GM10248 (cell line): ENCODE measurements at regions of chr7 and their contacts with region 1.

Region 1: DNA sequence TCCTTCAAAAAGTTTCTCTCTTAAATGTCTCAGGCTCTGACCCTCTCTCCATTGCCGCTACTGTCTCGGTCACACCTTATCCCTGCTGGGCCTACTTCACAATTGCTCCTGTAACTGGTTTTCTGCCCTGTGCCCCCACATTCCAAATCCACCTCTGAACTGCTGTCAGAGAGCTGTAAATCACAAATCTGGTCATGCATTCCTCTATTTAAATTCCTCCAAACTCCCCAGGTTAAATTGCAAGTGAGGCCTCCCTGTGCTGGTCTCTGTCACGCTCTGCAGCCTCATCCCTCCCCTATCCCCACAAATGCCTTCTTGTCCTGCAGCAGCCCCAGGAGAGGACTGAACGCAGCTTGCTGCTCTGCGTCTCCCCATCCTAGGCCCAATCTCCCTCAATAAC is 40.4 kb upstream of the CDCA7L start:
- DNase-seq: no peak
- CTCF ChIP-seq: no peak

Region 2: DNA sequence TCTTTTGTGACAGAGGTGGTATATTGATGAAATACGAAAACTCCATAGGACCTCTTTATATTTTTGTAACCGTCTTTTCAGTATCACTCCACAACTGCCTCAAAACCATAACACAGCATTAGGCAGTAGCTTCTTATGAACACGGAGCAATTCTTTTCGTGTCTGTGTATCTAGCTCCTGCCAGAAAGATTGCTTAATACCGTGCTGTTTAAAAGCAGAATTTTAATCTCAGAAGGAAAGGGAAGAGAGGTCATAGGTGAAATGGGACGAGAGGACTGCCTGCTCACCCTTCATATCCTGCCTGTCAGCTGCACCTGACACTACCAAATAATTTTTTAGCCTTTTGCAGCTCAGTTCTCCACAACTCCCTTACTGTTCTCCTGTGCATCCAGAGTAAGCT is 242.6 kb before region 1 on chr7:
- CTCF ChIA-PET with region 1: no interaction called
- POLR2A ChIA-PET with region 1: no interaction called
- DNase-seq: no peak
- CTCF ChIP-seq: no peak

Region 3: GRCh38 chr7:21972397-21972784 is 13.7 kb before region 1 on chr7:
- CTCF ChIA-PET with region 1: interaction called, 10 read pairs
- POLR2A ChIA-PET with region 1: no interaction called
- DNase-seq: no peak
- CTCF ChIP-seq: no peak

Region 4: GRCh38 chr7:22082886-22083703 is 97.0 kb after region 1 on chr7:
- CTCF ChIA-PET with region 1: no interaction called
- POLR2A ChIA-PET with region 1: no interaction called
- DNase-seq: peak; percentile 89
- CTCF ChIP-seq: peak; percentile 96